A549 (cell line): ENCODE measurements at regions of chr17 and their contacts with region 1.

Region 1: DNA sequence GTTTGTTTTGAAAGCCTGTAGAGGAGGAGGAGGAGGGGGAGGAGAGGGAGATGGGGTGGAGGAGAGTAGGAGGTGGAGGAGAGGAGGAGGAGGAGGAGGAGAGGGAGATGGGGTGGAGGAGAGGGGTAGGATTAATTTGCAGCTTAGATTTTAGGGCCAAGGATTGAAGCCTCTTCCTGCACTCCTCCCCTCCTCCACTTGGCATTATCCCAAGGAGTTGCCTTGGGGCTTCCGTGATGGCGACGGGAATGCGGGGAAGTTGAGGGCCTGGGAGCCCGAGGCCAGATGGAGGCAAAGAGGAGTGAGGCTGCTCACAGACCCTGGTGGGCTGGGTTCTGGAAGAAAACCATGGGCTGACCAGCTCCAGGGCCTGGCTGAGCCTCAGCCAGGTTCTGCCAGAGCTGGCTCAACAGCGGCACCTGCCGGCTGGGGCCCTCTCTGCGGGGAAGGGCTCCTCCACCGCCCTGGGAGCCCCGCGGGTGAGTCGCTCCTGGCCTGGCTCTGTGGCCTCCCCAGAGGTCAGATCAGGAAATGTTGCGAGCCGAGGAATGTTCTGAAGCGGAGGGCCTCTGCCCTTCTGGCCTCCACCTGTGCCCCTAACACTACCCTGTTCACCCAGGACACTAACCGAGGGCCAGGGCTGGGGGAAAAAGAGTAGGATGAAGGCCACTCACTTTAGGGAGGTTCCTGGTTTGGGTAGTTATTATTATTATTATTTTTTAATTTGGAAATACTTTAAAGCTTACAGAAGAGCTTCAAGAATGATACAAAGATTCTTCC is 23.9 kb upstream of the FMNL1 start:
- DNase-seq: peak; percentile 80 to 95
- ATAC-seq: peak; percentile 96 to 98
- H3K4me3 ChIP-seq: no peak overlapping the region
- H3K27ac ChIP-seq: peak overlapping the region; percentile 93 to 94
- H3K4me1 ChIP-seq: peaks cover 51% of the 10 kb centered on the region
- CTCF ChIP-seq: peak; percentile 100
- EP300 ChIP-seq: no peak
- POLR2A ChIP-seq: no peak
- RAD21 ChIP-seq: peak; percentile 100

Region 2: GRCh38 chr17:45098869-45099616 is 98.7 kb before region 1 on chr17:
- CTCF ChIA-PET with region 1: interaction called, 19 read pairs
- POLR2A ChIA-PET with region 1: no interaction called
- DNase-seq: peak; percentile 85 to 99
- ATAC-seq: peak; percentile 87 to 92
- H3K4me3 ChIP-seq: no peak overlapping the region
- H3K27ac ChIP-seq: no peak overlapping the region
- H3K4me1 ChIP-seq: peaks cover 11% of the 10 kb centered on the region
- CTCF ChIP-seq: peak; percentile 98
- EP300 ChIP-seq: no peak
- POLR2A ChIP-seq: no peak
- RAD21 ChIP-seq: peak; percentile 84 to 87

Region 3: DNA sequence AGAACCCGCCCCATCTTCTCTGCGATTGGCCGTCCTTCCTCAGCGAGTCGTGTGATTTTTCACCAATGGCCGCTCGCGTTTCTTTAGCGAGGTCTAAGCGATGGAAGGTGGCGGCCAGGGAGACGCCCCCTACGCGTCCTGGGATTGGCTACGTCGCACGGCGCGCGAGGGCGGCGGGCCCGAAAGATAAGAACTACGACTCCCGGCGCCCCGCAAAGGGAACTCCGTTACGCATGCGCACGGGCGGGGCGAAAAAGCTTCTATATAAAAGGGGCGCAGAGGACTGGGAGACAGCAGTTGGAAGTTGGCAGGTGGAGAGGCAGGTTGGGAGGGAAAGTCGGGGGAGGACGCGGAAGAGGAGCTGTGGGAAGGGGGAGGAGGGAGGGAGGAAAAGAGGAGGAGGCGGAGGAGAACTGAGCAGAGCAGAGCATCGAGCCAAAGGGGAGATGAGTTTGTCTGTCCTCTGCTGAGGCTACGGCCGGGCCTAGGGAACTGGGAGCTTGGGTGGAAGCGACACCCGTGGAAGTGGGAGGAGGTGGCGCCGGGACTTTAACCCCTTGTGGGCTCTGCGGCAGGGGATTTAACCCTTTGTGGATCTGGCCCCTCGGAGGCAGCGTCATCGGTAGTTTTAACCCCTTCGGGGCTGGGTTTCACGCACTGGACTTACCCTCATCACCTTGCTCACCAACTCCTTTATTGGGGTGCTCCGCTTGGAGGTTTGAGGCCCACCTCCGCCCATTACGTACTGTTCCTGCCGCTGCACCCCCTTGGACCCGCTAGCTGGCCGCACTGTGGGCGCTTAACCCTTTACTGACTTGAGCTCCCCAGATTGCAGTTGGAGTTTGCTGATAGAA is 49.3 kb before region 1 on chr17 and contains the start of gene HEXIM1:
- CTCF ChIA-PET with region 1: interaction called, 2,147 read pairs
- POLR2A ChIA-PET with region 1: interaction called, 352 read pairs
- DNase-seq: peak; percentile 99 to 100
- ATAC-seq: peak; percentile 74 to 86
- H3K4me3 ChIP-seq: peak within 1 kb of the TSS; percentile 74
- H3K27ac ChIP-seq: peak within 1 kb of the TSS; percentile 97 to 98
- H3K4me1 ChIP-seq: peaks cover 27% of the 10 kb centered on the region
- CTCF ChIP-seq: no peak
- EP300 ChIP-seq: no peak
- POLR2A ChIP-seq: peak; percentile 100
- RAD21 ChIP-seq: peak in 1 of 2 experiments; percentile 7; a peak in 1 of 5 replicates
- polyA plus RNA-seq, gene HEXIM1: 39.3 and 54.0 TPM in 2 replicates

Region 4: GRCh38 chr17:45172454-45173286 is 25.1 kb before region 1 on chr17:
- CTCF ChIA-PET with region 1: interaction called, 2,147 read pairs
- POLR2A ChIA-PET with region 1: interaction called, 48 read pairs
- DNase-seq: peak; percentile 90 to 99
- ATAC-seq: peak; percentile 73 to 79
- H3K4me3 ChIP-seq: peak overlapping the region; percentile 36
- H3K27ac ChIP-seq: peak overlapping the region; percentile 96 to 100
- H3K4me1 ChIP-seq: peaks cover 79% of the 10 kb centered on the region
- CTCF ChIP-seq: 0 out of 3 replicates have a peak, but pooled peaks have one; percentile 24
- EP300 ChIP-seq: peak; percentile 86 to 95
- POLR2A ChIP-seq: peak; percentile 46
- RAD21 ChIP-seq: peak; percentile 36 to 75

Region 5: DNA sequence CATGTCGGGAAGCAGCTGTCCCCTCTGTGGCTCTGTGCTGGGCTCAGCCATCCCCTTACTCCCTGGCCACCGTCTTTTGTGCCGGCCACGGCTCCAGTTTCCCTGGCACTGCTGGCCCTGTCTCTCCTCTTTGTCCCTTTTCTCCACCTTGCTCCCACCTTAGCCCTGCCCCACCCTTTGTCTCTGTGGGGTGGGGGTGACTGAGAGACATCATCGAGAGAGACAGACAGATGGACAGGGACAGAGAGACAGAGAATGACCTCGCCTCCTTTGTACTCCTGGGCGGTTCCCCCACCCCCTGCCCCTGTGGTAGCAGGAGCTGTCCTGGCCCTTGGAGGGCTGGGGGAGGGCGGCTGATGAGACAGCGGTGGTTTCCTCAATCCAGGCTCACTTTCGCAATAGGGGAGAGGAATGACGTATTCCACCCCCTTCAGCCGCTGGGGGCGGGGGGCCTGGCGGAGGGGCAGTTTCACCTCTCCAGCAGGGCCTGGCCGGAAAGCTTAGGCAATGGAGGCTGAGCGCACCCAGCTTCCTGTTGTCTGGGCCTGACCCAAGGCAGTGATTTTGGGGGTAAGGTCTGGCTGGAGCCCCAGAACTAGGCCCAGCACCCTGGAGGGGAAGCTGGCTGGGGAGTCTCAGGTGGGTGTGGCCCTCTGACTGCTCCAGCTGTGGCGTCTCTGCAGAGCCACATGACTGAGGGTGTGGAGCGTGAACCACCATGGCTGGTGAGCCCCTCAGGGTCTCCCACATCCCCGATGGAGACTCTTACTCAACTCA is 31.2 kb after region 1 on chr17:
- CTCF ChIA-PET with region 1: interaction called, 49 read pairs
- POLR2A ChIA-PET with region 1: no interaction called
- DNase-seq: peak; percentile 96 to 99
- ATAC-seq: peak; percentile 63 to 77
- H3K4me3 ChIP-seq: peak overlapping the region; percentile 9; the same call in 1 of the 3 replicates
- H3K27ac ChIP-seq: peak overlapping the region; percentile 97
- H3K4me1 ChIP-seq: peaks cover 85% of the 10 kb centered on the region
- CTCF ChIP-seq: no peak
- EP300 ChIP-seq: peak; percentile 93 to 99
- POLR2A ChIP-seq: peak; percentile 33
- RAD21 ChIP-seq: no peak; a peak in 3 of 5 replicates